OCI-LY7 (cell line): ENCODE measurements at regions of chr17 and their contacts with region 1.

Region 1: DNA sequence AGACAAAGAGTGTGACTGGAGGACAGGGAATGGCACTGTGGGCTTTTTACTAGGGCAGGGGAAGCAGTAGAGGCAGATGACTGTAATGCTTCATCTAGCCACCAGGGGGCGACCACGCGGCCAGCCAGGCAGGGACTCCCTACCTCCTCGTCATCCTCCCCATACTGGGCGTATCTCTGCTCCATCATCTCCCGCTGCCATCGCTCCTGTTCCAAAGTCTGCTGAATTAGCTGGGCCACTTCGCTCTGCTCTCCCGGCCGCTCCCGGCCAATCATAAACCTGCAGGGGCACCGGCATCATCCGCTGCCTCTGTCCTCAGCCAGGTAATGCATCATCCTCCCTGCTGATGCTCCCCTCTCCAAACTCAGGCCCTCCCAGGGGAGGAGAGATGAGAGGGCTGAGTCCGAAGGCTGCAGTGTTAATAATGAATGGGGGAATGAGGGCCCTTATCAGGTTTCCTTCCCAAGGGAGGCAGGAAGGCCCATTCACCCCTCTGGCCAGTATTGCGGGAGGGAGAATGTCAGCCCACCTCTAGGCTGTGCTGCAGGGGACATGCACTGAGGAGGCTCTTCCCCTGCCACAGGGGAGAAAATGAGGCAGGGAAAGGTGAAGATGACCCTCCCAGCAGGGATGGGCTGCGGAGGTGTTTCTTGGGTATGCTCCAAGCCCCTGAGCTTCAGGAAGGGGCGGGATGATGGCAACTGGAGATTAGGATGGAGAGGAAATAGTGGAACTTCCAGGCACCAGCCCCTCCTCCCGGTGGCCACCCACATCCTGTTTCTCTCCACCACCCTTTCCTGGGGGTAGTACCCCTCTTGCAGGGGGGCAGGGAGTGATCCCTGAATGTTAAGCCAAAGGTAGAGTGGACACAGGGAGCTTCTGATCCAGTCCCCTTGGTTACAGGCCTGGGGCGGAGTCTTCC is 10.3 kb upstream of the SAMD14 start:
- DNase-seq: peak; percentile 63
- H3K4me3 ChIP-seq: no peak overlapping the region
- H3K27ac ChIP-seq: no peak overlapping the region
- H3K4me1 ChIP-seq: peaks cover 24% of the 10 kb centered on the region
- CTCF ChIP-seq: peak; percentile 87

Region 2: DNA sequence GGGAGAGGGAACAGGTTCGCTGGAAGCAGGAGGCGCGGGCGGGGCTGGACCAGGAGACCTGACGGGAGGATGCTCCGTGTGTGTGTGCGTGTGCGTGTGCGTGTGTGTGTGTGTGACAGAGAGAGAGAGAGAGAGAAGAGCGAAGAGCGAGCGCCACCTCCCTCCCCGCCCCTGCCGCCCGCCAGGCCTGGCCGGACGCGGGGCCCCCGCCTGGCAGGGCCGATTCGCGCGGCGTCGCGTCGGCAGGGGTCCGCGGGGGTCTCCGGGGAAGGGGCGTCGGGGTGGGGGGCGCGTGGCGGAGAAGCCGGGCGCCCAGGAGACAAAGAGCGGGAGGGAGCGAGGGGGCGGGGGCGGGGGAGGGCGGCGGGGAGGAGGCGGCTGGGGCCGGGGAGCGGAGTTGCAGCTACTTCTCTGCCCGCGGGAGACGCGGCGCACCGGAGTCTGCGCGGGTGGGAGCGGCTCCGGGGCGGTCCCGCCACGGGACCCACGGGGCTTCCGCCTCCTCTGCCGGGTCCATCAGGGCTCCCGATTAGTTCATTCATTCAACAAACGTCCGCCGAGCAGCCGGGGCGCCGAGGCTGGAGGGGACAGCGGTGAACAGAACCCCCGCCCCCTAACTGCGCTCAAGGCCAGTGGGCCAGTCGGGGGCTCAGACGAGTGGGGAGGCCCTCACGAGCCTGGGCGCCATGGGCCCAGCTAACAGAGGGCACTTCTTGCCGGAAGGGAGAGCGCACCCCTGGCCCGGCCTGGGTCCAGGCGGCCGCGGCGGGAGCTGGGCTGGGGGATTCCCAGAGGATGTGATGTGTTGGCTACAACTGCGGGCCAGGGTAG is 10.3 kb before region 1 on chr17 and contains the start of gene SAMD14:
- CTCF ChIA-PET with region 1: interaction called, 11 read pairs
- POLR2A ChIA-PET with region 1: interaction called, 5 read pairs
- intact Hi-C with region 1: no loop called
- DNase-seq: no peak
- H3K4me3 ChIP-seq: peak within 1 kb of the TSS; percentile 36
- H3K27ac ChIP-seq: no peak within 1 kb of the TSS
- H3K4me1 ChIP-seq: peaks cover 11% of the 10 kb centered on the region
- CTCF ChIP-seq: no peak
- total RNA-seq, gene SAMD14: not detected in 2 replicates

Region 3: GRCh38 chr17:50161023-50161910 is 21.1 kb after region 1 on chr17:
- CTCF ChIA-PET with region 1: interaction called, 3 read pairs
- POLR2A ChIA-PET with region 1: no interaction called
- intact Hi-C with region 1: loop called (anchors 1 kb)
- DNase-seq: peak; percentile 93
- H3K4me3 ChIP-seq: peak overlapping the region; percentile 68
- H3K27ac ChIP-seq: no peak overlapping the region
- H3K4me1 ChIP-seq: peaks cover 23% of the 10 kb centered on the region
- CTCF ChIP-seq: peak; percentile 89